Heart right ventricle (tissue), 16 donors: ENCODE measurements at regions of chr6 and their contacts with region 1.

Region 1: DNA sequence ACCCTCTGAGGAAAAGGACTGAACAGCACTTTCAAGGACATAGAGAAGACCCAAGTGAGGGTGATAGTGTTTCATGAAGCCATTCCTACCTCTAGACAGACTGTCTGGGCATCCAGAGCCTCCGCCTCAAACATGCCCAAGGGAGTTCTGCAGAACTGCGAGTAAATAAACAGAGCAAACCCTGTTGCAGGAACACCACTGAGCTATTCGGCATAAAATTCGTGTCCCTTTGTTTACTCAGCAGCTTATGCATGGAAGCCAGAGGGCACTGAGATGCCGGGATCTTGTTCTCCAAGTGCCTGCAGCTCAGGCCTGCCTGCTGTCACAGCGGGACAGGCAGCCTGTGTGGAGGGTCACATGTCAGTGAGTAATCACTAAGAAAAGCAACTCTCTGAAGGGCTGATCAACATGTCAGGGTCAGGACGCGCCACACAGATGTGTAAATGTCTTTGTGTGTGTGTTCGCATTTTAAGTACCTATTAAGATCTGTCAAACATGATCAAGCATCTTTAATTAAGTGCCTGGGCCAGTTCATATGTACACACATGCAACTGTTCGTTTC is 164.9 kb upstream of the HEY2 start:
- DNase-seq: peak; percentile 44 to 60
- ATAC-seq: peak; percentile 81 to 97 (median 93)
- H3K4me3 ChIP-seq: no peak overlapping the region
- H3K27ac ChIP-seq: peak overlapping the region in 9 of 10 donors; percentile 45 to 77 (median 58)
- H3K4me1 ChIP-seq: peaks cover 0 to 30% (median 4%) of the 10 kb centered on the region in 9 donors
- H3K27me3 ChIP-seq: peaks cover 0 to 3% (median 0%) of the 10 kb centered on the region in 7 donors
- CTCF ChIP-seq: peak in 5 of 9 donors; percentile 11 to 57 (median 46)

Region 2: GRCh38 chr6:125670568-125670967 is 86.0 kb after region 1 on chr6:
- intact Hi-C with region 1: loop called in 2 of 10 experiments (anchors 1 to 5 kb)
- DNase-seq: peak in 1 of 2 donors; percentile 49
- ATAC-seq: peak; percentile 85 to 97 (median 95)
- H3K4me3 ChIP-seq: peak overlapping the region in 2 of 10 donors; percentile 5 to 14
- H3K27ac ChIP-seq: peak overlapping the region in 8 of 10 donors; percentile 29 to 69 (median 52)
- H3K4me1 ChIP-seq: peaks cover 0 to 15% (median 0%) of the 10 kb centered on the region in 9 donors
- H3K27me3 ChIP-seq: no peaks in the 10 kb centered on the region
- CTCF ChIP-seq: no peak

Region 3: GRCh38 chr6:125764121-125764671 is 179.6 kb after region 1 on chr6:
- intact Hi-C with region 1: loop called in 1 of 10 experiments (anchors 10 kb)
- DNase-seq: no peak
- ATAC-seq: no peak
- H3K4me3 ChIP-seq: no peak overlapping the region
- H3K27ac ChIP-seq: peak overlapping the region in 2 of 10 donors; percentile 10 to 19
- H3K4me1 ChIP-seq: peaks cover 0 to 49% (median 9%) of the 10 kb centered on the region in 9 donors
- H3K27me3 ChIP-seq: peaks cover 0 to 11% (median 0%) of the 10 kb centered on the region in 7 donors
- CTCF ChIP-seq: no peak

Region 4: GRCh38 chr6:126143761-126144251 is 559.3 kb after region 1 on chr6:
- intact Hi-C with region 1: no loop called
- DNase-seq: no peak
- ATAC-seq: peak in 1 of 8 donors; percentile 47
- H3K4me3 ChIP-seq: no peak overlapping the region
- H3K27ac ChIP-seq: no peak overlapping the region
- H3K4me1 ChIP-seq: peaks cover 0 to 8% (median 0%) of the 10 kb centered on the region in 9 donors
- H3K27me3 ChIP-seq: peaks cover 0 to 30% (median 0%) of the 10 kb centered on the region in 7 donors
- CTCF ChIP-seq: no peak